ENCODE measurements at regions of chr7 and their contacts with region 1.

Region 1: DNA sequence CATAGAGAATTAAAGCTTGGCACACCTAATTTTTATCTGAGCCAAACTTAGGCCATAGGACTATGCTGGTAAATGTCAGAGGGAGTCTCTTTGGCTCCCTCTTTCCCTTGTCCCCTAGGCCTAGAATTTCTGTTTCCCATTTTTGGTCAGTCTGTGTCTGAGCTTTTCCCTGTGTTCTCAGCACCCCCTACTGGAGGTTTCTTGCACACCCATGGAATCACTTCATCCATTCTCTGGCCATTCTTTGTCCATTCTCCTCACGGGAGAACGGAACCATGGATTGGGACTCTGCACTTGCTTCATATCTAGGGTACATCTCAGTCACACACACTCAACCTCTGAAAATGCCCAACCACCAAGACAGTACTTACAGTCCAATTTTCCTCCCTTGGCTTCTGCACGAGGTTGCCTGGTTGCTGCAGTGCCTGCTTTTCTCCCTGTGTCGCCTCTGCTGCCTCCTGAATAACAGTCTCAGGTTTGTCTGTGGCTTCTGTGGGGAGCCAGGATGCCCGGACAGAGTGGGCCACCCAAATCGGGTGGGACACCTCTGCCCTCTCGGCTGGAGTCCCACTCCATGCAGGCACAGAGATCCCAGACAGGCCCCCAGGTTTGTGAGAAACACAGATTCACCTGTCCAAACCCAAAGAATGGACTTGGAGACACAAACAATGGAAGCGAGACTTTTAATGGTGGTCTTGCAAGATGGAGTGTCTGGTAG is 35.1 kb upstream of the DNAH11 start:
- DNase-seq: peak; percentile 69

Region 2: DNA sequence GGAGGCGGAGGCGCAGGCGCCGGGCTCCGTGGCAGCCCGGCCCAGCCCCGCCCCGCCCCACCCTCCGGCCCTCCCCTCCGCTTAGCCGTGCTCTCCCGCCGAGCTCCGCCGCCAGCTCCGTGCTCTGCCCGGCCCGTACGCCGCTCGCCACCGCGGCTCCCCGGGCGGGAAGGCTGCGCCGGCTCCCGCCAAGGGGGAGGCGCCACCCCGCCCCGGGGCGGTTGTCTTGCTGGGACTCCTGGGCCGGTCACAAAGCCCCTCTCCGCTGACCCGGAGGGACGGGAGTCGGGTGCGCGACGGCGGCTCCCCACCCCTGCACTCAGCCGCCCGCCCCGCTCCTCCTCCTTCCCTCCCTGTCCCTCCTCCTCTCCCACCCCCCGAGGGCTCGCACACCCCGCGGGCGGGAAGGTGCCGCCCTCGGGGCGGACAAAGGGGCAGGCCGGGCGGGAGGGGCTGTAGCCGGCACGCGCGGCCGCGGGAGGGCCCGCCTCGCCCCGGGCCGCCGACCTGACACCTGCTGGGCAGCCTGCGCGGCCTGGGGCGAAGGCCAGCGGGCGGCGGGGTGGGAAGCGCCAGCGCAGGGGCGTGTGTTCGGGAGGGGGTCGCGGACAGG is 709.6 kb before region 1 on chr7:
- in situ Hi-C with region 1: loop called (anchors 25 kb)
- DNase-seq: peak; percentile 51

Region 3: DNA sequence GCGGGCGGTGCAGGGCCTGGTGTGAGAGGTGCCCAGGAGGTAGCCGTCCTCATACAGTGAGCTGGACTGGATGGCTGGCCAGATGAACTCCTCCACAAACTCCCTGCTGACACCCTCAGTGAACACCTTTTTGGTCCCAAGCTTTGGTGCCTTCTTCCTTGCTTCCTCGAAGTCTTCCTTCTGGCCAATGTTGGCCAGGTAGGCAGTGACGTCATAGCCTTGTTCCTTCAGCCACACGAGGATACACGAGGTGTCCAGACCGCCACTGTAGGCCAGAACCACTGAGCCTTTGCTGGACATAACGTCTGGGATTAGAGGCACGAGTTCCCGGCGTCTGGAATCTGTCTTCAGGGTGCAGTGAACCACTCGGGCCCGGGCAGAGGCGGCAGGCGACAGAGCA is 286.7 kb before region 1 on chr7:
- in situ Hi-C with region 1: no loop called
- DNase-seq: no peak

Region 4: GRCh38 chr7:21261627-21262594 is 245.9 kb before region 1 on chr7:
- in situ Hi-C with region 1: loop called (anchors 25 kb)
- DNase-seq: peak; percentile 62

Region 5: DNA sequence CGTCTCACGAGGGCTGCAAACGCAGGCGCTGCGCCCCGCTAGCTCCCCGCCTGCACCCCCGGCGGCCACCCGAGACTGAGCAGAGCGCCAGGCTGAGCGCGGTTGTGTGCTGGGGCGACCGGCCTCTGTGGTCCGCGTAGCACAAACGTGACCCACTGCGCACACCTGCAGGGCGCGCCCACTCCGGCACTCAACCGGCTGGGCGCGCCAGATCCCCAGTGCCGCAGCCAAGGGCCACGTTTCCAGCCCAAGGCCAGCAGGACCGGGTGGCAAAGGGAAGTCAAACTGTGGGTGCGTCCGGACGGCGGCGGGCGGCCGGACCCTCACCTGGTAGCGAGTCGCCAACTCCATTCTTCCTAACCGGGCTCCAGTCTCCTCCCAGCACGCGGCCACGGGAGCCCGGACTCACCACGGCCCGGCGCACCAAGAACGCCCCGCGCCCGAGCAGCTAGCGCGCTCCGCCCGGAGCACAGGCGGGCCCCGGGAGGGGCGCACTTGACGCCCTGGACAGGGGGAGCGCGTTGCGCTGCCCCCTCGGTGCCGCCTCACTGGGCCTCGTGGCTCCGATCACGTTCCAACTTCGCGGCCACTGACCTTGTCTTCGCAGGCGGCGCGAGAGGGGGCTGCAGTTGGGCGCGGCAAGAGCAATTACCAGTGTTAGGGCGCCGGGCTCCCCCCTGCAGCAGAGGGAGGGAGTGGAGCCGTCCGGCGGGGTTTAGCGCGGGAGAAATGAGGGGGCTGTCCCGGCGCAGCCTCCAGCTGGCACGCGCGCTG is 437.9 kb after region 1 on chr7 and contains the start of gene CDCA7L:
- in situ Hi-C with region 1: no loop called
- DNase-seq: peak; percentile 89